ENCODE measurements at regions of chr12 and their contacts with region 1.

Region 1: GRCh38 chr12:13196130-13196921 is at the start of gene EMP1:
- DNase-seq: peak; percentile 73 to 88
- ATAC-seq: peak; percentile 77 to 85
- H3K4me3 ChIP-seq: peak within 1 kb of the TSS; percentile 46 to 67 (median 56)
- H3K27ac ChIP-seq: peak within 1 kb of the TSS; percentile 74 to 86 (median 81)
- H3K4me1 ChIP-seq: peaks cover 6 to 36% of the 10 kb centered on the region in 2 donors
- H3K27me3 ChIP-seq: peaks cover 0 to 4% (median 2%) of the 10 kb centered on the region in 3 donors
- CTCF ChIP-seq: no peak
- POLR2A ChIP-seq: peak; percentile 57 to 83
- total RNA-seq, gene EMP1: 33.5 to 111 (median 73.6) TPM

Region 2: DNA sequence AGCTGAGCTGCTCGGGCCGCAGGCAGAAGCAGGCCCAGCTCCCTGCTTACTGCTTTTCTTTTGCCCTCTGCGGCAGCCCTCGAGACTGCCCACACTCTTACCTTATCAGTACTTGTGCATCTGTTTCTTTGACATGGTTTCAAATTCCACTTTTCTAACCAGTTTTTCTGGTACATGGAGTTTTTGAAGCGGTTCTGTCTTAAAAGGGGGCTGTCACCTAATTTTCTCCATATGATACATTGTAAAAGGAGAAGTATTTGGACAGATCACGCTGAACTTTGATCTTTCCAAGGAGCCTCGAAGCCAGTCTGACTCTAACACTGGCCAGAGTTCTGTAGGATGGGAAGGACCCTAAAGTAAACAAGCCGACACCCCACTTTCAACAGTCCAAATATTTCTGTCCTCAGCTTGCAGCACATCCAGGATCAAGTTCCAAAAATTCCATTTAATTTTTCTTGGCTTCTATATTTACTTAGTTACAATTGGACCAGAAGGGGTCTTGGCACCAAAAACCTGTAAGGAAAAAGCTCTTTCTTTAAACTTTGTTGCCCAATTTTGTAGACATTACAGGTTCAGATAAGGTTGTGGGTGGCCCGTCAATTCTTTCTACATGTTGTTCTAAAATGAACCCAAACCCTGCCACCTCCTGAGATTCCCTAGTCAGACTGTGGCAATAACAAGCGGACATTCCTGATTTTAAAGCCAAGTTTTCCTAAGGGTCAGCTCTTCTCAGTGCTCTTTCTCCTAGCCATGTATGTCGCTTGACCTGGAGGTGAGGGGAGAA is 48.1 kb before region 1 on chr12:
- in situ Hi-C with region 1: no loop called
- intact Hi-C with region 1: loop called (anchors 10 kb)
- DNase-seq: peak in 1 of 2 donors; percentile 46
- ATAC-seq: peak; percentile 18 to 66
- H3K4me3 ChIP-seq: no peak overlapping the region
- H3K27ac ChIP-seq: peak overlapping the region; percentile 28 to 65 (median 40)
- H3K4me1 ChIP-seq: peaks cover 6% of the 10 kb centered on the region in 2 donors
- H3K27me3 ChIP-seq: no peaks in the 10 kb centered on the region
- CTCF ChIP-seq: no peak
- POLR2A ChIP-seq: no peak

Region 3: GRCh38 chr12:13179211-13180074 is 16.9 kb before region 1 on chr12:
- in situ Hi-C with region 1: no loop called
- intact Hi-C with region 1: loop called (anchors 2 kb)
- DNase-seq: peak in 1 of 2 donors; percentile 30
- ATAC-seq: peak; percentile 66 to 70
- H3K4me3 ChIP-seq: no peak overlapping the region
- H3K27ac ChIP-seq: peak overlapping the region; percentile 44 to 64 (median 56)
- H3K4me1 ChIP-seq: peaks cover 7% of the 10 kb centered on the region in 2 donors
- H3K27me3 ChIP-seq: no peaks in the 10 kb centered on the region
- CTCF ChIP-seq: no peak
- POLR2A ChIP-seq: no peak